Pancreas (tissue), 10 donors: ENCODE measurements at regions of chr20 and their contacts with region 1.

Region 1: GRCh38 chr20:22575087-22575721 is 9.2 kb downstream of the FOXA2 start:
- DNase-seq: no peak
- ATAC-seq: no peak
- H3K4me3 ChIP-seq: peak overlapping the region in 2 of 4 donors; percentile 74 to 90
- H3K27ac ChIP-seq: peak overlapping the region; percentile 30 to 98 (median 94)
- H3K4me1 ChIP-seq: peaks cover 27 to 41% (median 35%) of the 10 kb centered on the region in 3 donors
- H3K27me3 ChIP-seq: no peaks in the 10 kb centered on the region
- CTCF ChIP-seq: no peak

Region 2: DNA sequence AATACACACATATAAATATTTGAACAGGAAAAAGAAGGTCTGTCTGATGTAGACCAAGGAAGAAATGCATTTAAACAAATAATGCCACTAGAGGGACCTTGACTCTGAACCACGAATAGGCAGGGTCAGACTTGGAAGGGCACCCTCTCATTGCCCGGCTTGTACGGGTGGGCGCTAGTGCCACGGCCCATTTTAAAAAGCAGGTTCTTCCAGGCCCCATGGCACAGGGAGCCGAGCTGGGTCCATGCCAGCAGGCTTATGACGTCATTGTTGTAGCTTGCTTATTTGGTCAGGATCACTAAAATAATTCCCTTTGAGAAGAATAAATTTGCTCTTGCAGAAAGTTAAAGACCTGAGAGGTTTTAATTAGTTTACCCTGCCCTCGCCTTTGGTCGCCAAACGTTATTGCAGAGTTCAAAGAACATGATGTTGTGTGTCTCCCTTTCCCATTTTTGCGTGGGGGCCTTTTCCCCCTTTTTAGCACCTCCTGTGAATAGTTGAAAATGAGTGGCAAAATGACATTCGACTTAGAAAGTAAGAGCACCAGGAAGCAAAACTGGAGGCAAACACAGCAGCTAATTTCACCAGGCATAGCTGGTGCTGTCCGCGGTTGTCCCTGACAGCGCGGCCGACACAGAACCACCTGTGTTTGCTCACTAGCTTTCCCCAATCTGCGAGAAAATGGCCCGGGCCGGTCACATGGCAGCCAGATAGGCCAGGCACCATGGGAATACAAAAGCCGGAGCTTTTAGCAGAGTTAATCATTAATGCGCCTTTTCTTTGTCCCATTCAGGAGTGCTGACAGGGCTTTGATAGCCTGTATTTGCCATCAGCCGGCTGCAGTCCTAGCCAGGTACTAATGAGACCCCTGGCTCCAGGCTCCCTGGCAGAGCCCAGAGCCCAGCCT is 84.7 kb before region 1 on chr20:
- intact Hi-C with region 1: loop called in 1 of 3 experiments (anchors 5 kb)
- DNase-seq: peak; percentile 89 to 98 (median 96)
- ATAC-seq: peak; percentile 89 to 95 (median 94)
- H3K4me3 ChIP-seq: peak overlapping the region in 2 of 4 donors; percentile 18 to 19
- H3K27ac ChIP-seq: peak overlapping the region; percentile 85 to 96 (median 96)
- H3K4me1 ChIP-seq: peaks cover 32 to 43% (median 38%) of the 10 kb centered on the region in 3 donors
- H3K27me3 ChIP-seq: no peaks in the 10 kb centered on the region
- CTCF ChIP-seq: no peak